ENCODE measurements at regions of chr5 and their contacts with region 1.

Region 1: GRCh38 chr5:148730943-148731861 is 76.9 kb upstream of the HTR4 start:
- H3K4me3 ChIP-seq: no peak overlapping the region
- H3K27ac ChIP-seq: no peak overlapping the region
- H3K4me1 ChIP-seq: peaks cover 10% of the 10 kb centered on the region; the same call in 1 of the 2 replicates
- CTCF ChIP-seq: peak; percentile 82

Region 2: DNA sequence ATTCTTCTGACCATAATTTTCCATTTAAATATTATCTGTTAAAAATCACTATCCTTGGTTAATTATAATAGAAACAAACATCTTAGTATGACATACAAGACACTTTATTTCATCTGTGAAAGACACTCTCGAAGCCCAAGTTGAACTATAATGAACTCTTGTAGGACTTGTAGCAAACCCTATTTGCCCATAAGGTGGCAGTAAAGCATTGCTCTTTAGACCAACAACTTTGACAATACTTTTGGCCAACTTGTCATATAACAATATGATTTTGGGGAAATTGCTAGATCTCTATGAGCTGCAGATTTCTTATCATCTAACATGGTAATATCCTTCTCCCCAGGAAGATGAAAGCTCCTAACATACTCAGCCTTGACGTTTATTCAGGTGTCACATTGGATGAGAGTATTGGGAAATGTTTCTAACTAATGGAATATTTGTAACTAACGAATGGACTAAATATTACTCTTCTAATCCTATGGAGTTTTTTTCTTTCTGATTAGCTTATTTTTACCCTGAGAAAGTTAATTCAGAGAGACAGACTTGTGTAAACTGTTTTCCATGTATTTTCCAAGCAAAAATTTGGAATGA is 551.9 kb before region 1 on chr5:
- CTCF ChIA-PET with region 1: interaction called, 47 read pairs
- POLR2A ChIA-PET with region 1: no interaction called
- H3K4me3 ChIP-seq: no peak overlapping the region
- H3K27ac ChIP-seq: no peak overlapping the region
- H3K4me1 ChIP-seq: no peaks in the 10 kb centered on the region
- CTCF ChIP-seq: peak; percentile 11; the same call in 1 of the 2 replicates

Region 3: DNA sequence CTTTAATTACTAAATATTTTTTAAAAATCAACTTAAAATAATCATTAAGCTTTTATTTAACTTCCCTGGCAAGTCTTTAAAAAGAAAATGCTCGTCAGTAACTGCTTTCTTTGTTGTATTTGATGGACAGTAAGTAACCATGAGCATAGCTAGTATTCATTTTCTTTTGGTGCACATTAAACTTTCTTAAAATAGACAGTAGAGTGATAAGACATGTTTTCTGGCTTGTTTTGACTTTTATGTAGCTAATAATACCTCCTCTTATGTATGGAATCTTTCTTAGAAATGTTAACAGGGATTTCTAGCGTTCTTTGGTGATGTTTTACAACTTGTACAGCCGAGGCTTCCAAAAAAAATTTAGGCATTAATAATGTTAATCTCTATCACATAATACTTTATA is 324.8 kb before region 1 on chr5:
- CTCF ChIA-PET with region 1: interaction called, 14 read pairs
- POLR2A ChIA-PET with region 1: no interaction called
- H3K4me3 ChIP-seq: no peak overlapping the region
- H3K27ac ChIP-seq: no peak overlapping the region
- H3K4me1 ChIP-seq: no peaks in the 10 kb centered on the region
- CTCF ChIP-seq: no peak

Region 4: DNA sequence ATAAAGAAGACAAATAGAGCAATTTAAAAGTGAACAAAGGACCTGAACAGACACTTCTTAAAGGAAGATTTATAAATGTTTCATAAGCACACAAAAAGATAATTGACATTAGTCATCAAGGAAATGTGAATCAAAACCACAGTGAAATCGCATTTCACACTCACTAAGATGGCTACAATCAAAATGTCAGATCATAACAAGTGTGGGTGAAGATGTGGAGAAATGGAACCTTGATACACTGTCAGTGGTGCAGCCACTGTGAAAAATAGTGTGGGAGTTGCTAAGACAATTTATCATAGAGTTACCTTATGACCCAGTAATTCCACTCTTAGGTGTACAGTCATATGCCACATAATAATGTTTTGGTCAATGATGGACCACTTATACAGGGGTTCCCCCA is 22.3 kb before region 1 on chr5:
- CTCF ChIA-PET with region 1: interaction called, 16 read pairs
- POLR2A ChIA-PET with region 1: no interaction called
- H3K4me3 ChIP-seq: no peak overlapping the region
- H3K27ac ChIP-seq: no peak overlapping the region
- H3K4me1 ChIP-seq: no peaks in the 10 kb centered on the region
- CTCF ChIP-seq: no peak

Region 5: GRCh38 chr5:148820461-148821395 is 89.5 kb after region 1 on chr5:
- CTCF ChIA-PET with region 1: interaction called, 13 read pairs
- POLR2A ChIA-PET with region 1: no interaction called
- H3K4me3 ChIP-seq: no peak overlapping the region
- H3K27ac ChIP-seq: no peak overlapping the region
- H3K4me1 ChIP-seq: peaks cover 5% of the 10 kb centered on the region; the same call in 1 of the 2 replicates
- CTCF ChIP-seq: peak; percentile 32

Region 6: DNA sequence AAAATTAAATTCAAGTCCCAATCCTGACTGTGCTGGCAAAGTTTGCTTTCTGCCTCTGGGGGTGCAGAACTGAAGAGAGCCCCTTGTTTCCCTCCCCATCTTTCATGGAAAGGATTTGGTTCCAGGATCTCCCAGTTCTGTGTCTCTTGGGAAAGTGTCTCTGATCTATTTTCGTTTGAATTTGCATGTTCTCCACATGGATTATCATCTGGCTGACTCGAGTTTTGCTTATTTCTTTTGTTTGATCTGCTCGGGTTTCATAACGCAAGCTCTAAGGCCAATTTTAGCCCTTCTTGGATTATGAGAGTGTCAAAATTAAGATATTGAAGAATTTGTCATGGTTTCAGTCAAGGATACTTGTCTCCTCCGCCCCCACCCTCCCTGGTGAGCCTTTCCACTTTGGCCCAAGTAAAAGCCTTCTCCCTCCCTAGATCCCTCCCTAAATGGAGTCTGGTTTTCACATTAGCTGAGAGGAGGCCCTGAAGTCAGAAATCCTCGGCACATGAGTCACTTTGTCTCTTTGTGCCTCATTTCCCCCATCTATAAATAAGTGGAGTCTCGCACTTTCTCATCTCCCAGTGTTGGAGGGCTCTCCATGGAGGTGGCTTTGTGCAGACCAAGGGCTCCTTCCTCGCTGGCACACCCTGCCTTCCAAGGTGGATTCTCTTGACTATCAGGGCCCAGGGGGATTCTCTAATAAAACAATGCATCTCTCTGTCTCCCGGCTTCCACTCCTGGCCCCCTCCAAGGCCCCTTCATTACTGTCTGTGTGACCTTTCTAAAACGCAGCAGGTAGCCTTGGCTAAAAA is 112.5 kb after region 1 on chr5:
- CTCF ChIA-PET with region 1: no interaction called
- POLR2A ChIA-PET with region 1: no interaction called
- H3K4me3 ChIP-seq: no peak overlapping the region
- H3K27ac ChIP-seq: no peak overlapping the region
- H3K4me1 ChIP-seq: peaks cover 3% of the 10 kb centered on the region; the same call in 1 of the 2 replicates
- CTCF ChIP-seq: no peak

Region 7: DNA sequence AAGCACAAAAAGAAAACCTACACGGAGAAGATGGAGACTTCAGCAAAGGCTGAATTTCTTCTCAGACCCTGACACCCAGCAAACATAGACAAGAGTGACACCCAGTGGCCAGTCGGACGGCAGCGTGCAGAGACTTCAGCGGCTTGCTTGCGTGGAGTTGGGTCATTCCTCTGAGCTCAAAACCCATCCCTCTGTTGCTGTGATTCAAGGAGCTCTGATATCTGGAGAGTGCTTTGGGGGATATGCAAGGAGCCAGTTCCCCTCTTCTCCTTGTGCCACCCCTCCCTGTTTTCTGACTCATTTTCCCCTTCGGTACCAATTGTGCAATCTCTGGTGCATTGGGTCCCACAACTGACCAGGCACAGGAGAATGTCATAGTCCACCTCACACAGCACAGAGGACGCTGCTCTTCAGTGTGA is 304.2 kb after region 1 on chr5:
- CTCF ChIA-PET with region 1: interaction called, 489 read pairs
- POLR2A ChIA-PET with region 1: no interaction called
- H3K4me3 ChIP-seq: no peak overlapping the region
- H3K27ac ChIP-seq: no peak overlapping the region
- H3K4me1 ChIP-seq: no peaks in the 10 kb centered on the region
- CTCF ChIP-seq: peak; percentile 53; the same call in 1 of the 2 replicates

Region 8: DNA sequence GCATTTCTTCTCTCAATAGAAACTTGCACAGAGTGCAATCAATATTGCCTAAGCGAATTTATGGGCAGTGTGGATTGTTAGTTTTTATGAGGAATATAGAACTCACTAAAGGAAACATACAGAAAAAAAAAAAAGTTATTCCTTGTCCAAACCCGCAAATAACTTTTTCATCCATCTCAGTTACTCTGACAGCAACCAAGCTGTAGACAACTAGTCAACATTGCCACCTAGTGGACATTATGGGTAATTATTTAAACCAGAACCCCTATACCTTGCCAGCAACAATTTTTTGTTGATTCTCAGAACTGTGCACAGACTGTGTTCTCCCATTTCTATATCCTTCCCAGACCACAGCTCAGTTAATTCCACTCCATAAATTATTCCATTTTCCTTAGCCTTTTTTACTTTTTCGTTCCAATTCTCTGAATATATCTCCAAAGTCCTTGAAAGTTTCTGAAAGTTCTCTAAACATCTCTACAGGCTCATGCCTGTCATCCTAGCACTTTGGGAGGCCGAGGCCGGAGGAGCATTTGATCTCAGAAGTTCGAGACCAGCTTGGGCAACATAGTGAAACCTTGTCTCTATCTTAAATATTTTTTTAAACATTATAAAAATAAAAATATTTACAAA is 537.8 kb after region 1 on chr5:
- CTCF ChIA-PET with region 1: interaction called, 35 read pairs
- POLR2A ChIA-PET with region 1: no interaction called
- H3K4me3 ChIP-seq: no peak overlapping the region
- H3K27ac ChIP-seq: no peak overlapping the region
- H3K4me1 ChIP-seq: peaks cover 3% of the 10 kb centered on the region; the same call in 1 of the 2 replicates
- CTCF ChIP-seq: peak; percentile 28